MCF 10A (cell line): ENCODE measurements at regions of chr6 and their contacts with region 1.

Region 1: GRCh38 chr6:32984605-32985389 is 16.4 kb downstream of the BRD2 start:
- DNase-seq: peak; percentile 91
- H3K4me3 Mint-ChIP-seq: no peak overlapping the region
- H3K27ac Mint-ChIP-seq: no peak overlapping the region
- H3K4me1 Mint-ChIP-seq: peaks cover 20% of the 10 kb centered on the region
- H3K27me3 Mint-ChIP-seq: no peaks in the 10 kb centered on the region
- CTCF ChIP-seq: peak; percentile 81

Region 2: DNA sequence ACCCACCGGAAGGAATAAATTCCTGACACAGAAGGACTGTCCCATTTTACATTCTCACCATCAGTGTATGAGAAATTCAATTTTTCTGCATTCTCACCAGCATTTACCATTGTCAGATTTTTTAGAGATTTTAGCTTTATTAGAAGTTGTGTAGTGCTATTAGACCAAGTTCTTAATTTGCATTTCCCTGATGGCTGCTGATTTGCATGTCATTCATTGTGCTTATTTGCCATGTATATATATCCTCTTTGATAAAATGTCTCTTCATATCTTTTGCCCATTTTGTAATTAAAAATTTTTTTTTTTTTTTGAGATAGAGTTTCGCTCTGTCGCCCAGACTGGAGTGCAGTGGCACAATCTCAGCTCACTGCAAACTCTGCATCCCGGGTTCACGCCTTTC is 445.0 kb before region 1 on chr6:
- CTCF ChIA-PET with region 1: no interaction called
- POLR2A ChIA-PET with region 1: no interaction called
- intact Hi-C with region 1: no loop called
- DNase-seq: no peak
- H3K4me3 Mint-ChIP-seq: no peak overlapping the region
- H3K27ac Mint-ChIP-seq: no peak overlapping the region
- H3K4me1 Mint-ChIP-seq: no peaks in the 10 kb centered on the region
- H3K27me3 Mint-ChIP-seq: peaks cover 58% of the 10 kb centered on the region
- CTCF ChIP-seq: no peak

Region 3: GRCh38 chr6:32838114-32838958 is 146.5 kb before region 1 on chr6 and contains the start of gene TAP2:
- CTCF ChIA-PET with region 1: interaction called, 17 read pairs
- POLR2A ChIA-PET with region 1: interaction called, 6 read pairs
- intact Hi-C with region 1: no loop called
- DNase-seq: peak; percentile 91
- H3K4me3 Mint-ChIP-seq: peak within 1 kb of the TSS; percentile 77
- H3K27ac Mint-ChIP-seq: peak within 1 kb of the TSS; percentile 29
- H3K4me1 Mint-ChIP-seq: peaks cover 34% of the 10 kb centered on the region
- H3K27me3 Mint-ChIP-seq: no peaks in the 10 kb centered on the region
- CTCF ChIP-seq: peak; percentile 96
- total RNA-seq, gene TAP2: 43.3 and 61.2 TPM in 2 replicates

Region 4: GRCh38 chr6:32894080-32895005 is 90.5 kb before region 1 on chr6:
- CTCF ChIA-PET with region 1: interaction called, 9 read pairs
- POLR2A ChIA-PET with region 1: interaction called, 4 read pairs
- intact Hi-C with region 1: loop called (anchors 2 kb)
- DNase-seq: peak; percentile 90
- H3K4me3 Mint-ChIP-seq: peak overlapping the region; percentile 84
- H3K27ac Mint-ChIP-seq: peak overlapping the region; percentile 80
- H3K4me1 Mint-ChIP-seq: peaks cover 10% of the 10 kb centered on the region
- H3K27me3 Mint-ChIP-seq: no peaks in the 10 kb centered on the region
- CTCF ChIP-seq: no peak

Region 5: DNA sequence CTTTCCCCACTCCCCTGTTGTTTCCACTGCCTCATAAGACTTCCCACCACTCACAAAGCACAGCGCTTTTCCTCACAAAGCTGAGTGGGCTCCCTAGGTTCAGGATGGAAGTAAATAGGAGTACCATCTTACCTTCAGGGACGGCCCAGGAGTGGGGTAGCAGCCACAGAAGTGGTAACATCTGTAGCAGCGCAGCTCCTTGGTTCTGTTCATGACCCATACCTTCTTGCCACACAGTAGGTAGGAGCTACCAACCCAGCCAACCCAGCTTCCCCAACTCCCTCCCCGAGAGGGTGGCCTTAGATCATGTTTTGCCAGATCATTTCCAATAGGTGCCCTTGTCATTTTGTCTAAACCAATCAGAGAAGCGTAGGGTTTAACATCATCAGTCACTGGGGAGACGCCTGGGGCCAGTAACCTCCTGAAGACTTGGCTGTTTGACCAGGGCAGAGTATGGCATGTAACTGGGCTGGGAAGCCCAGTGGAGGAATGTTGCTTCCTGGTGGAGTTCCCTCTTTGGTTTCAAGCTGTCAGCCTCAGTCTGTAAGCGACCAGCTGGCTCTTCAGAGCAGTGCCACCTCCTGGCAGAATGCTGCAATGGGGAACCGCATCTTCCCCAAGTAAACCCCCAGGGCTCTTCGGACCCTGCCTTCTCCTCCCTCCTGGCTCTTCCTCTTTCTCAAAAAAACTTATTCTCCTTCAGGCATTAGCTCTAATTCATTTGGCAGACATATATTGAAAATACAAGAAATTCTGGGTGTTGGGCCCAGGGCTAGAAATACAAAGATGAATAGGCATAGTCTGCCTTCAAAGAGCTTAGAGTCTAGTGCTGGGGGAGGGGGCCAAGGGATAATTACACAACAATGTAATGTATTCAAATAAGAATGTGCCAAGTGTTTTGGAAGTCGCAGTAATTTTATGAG is 31.7 kb before region 1 on chr6 and contains the start of gene HLA-DMA:
- CTCF ChIA-PET with region 1: interaction called, 38 read pairs
- POLR2A ChIA-PET with region 1: interaction called, 7 read pairs
- intact Hi-C with region 1: loop called (anchors 2 kb)
- DNase-seq: peak; percentile 89
- H3K4me3 Mint-ChIP-seq: no peak within 1 kb of the TSS
- H3K27ac Mint-ChIP-seq: no peak within 1 kb of the TSS
- H3K4me1 Mint-ChIP-seq: no peaks in the 10 kb centered on the region
- H3K27me3 Mint-ChIP-seq: no peaks in the 10 kb centered on the region
- CTCF ChIP-seq: peak; percentile 45
- total RNA-seq, gene HLA-DMA: 2.4 and 2.9 TPM in 2 replicates